Body of pancreas (tissue), 4 donors: ENCODE measurements at regions of chr21 and their contacts with region 1.

Region 1: DNA sequence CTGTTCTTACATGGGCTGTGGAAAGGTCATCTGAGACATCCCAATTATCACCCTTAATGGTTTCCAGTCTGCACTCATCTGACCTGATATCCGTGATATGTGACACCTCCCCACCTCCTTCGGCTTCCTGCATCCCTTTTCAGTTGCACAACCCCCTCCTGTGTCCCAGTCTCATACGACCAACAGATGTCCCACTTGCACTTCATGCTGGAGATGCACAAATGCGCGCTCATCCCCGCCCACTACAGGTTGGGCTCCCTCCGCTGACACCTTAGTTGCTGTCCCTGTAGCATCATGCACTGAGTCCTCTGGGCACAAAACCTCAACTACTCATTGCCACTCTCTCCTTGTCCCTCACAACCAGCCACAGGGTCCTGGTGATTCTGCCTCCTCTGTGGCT is 94.4 kb downstream of the MIS18A start:
- DNase-seq: no peak
- ATAC-seq: no peak
- H3K4me3 ChIP-seq: no peak overlapping the region
- H3K27ac ChIP-seq: no peak overlapping the region
- H3K4me1 ChIP-seq: no peaks in the 10 kb centered on the region
- H3K27me3 ChIP-seq: no peaks in the 10 kb centered on the region
- CTCF ChIP-seq: no peak
- POLR2A ChIP-seq: no peak

Region 2: GRCh38 chr21:32120230-32120629 is 64.3 kb before region 1 on chr21:
- intact Hi-C with region 1: loop called (anchors 10 kb)
- DNase-seq: no peak
- ATAC-seq: no peak
- H3K4me3 ChIP-seq: no peak overlapping the region
- H3K27ac ChIP-seq: no peak overlapping the region
- H3K4me1 ChIP-seq: no peaks in the 10 kb centered on the region
- H3K27me3 ChIP-seq: no peaks in the 10 kb centered on the region
- CTCF ChIP-seq: no peak
- POLR2A ChIP-seq: no peak

Region 3: GRCh38 chr21:32569261-32570230 is 385.1 kb after region 1 on chr21:
- intact Hi-C with region 1: no loop called
- DNase-seq: peak; percentile 78 to 86 (median 82)
- ATAC-seq: peak; percentile 82
- H3K4me3 ChIP-seq: peak overlapping the region; percentile 18 to 27
- H3K27ac ChIP-seq: peak overlapping the region; percentile 61 to 85 (median 80)
- H3K4me1 ChIP-seq: peaks cover 12% of the 10 kb centered on the region
- H3K27me3 ChIP-seq: no peaks in the 10 kb centered on the region
- CTCF ChIP-seq: peak; percentile 64 to 82 (median 74)
- POLR2A ChIP-seq: peak; percentile 7 to 53 (median 51)